ENCODE measurements at regions of chr19 and their contacts with region 1.

Region 1: GRCh38 chr19:45886427-45887199 is 672 bp upstream of the IRF2BP1 start:
- DNase-seq: peak; percentile 80 to 95 (median 85)
- ATAC-seq: peak; percentile 68
- H3K4me3 ChIP-seq: peak overlapping the region; percentile 78
- H3K4me3 Mint-ChIP-seq: peak overlapping the region; percentile 98
- H3K27ac ChIP-seq: peak overlapping the region; percentile 82 to 87
- H3K27ac Mint-ChIP-seq: peak overlapping the region; percentile 99
- H3K4me1 ChIP-seq: peaks cover 46% of the 10 kb centered on the region
- H3K4me1 Mint-ChIP-seq: peaks cover 31% of the 10 kb centered on the region
- H3K27me3 ChIP-seq: no peaks in the 10 kb centered on the region
- H3K27me3 Mint-ChIP-seq: no peaks in the 10 kb centered on the region
- CTCF ChIP-seq: no peak

Region 2: GRCh38 chr19:45753546-45753945 is 133.1 kb before region 1 on chr19:
- CTCF ChIA-PET with region 1: no interaction called
- POLR2A ChIA-PET with region 1: no interaction called
- intact Hi-C with region 1: no loop called
- DNase-seq: no peak
- ATAC-seq: no peak
- H3K4me3 ChIP-seq: no peak overlapping the region
- H3K4me3 Mint-ChIP-seq: no peak overlapping the region
- H3K27ac ChIP-seq: no peak overlapping the region
- H3K27ac Mint-ChIP-seq: no peak overlapping the region
- H3K4me1 ChIP-seq: no peaks in the 10 kb centered on the region
- H3K4me1 Mint-ChIP-seq: no peaks in the 10 kb centered on the region
- H3K27me3 ChIP-seq: no peaks in the 10 kb centered on the region
- H3K27me3 Mint-ChIP-seq: no peaks in the 10 kb centered on the region
- CTCF ChIP-seq: no peak

Region 3: GRCh38 chr19:45770192-45771101 is 116.2 kb before region 1 on chr19:
- CTCF ChIA-PET with region 1: no interaction called
- POLR2A ChIA-PET with region 1: interaction called, 21 read pairs
- intact Hi-C with region 1: loop called in 1 of 2 experiments (anchors 1 kb)
- DNase-seq: peak; percentile 82 to 95 (median 90)
- ATAC-seq: peak; percentile 75
- H3K4me3 ChIP-seq: peak overlapping the region; percentile 79
- H3K4me3 Mint-ChIP-seq: peak overlapping the region; percentile 89
- H3K27ac ChIP-seq: peak overlapping the region in 1 of 2 donors; percentile 52
- H3K27ac Mint-ChIP-seq: peak overlapping the region; percentile 87
- H3K4me1 ChIP-seq: peaks cover 35% of the 10 kb centered on the region
- H3K4me1 Mint-ChIP-seq: peaks cover 25% of the 10 kb centered on the region
- H3K27me3 ChIP-seq: peaks cover 12 to 22% of the 10 kb centered on the region in 2 experiments
- H3K27me3 Mint-ChIP-seq: peaks cover 5% of the 10 kb centered on the region
- CTCF ChIP-seq: peak; percentile 97

Region 4: DNA sequence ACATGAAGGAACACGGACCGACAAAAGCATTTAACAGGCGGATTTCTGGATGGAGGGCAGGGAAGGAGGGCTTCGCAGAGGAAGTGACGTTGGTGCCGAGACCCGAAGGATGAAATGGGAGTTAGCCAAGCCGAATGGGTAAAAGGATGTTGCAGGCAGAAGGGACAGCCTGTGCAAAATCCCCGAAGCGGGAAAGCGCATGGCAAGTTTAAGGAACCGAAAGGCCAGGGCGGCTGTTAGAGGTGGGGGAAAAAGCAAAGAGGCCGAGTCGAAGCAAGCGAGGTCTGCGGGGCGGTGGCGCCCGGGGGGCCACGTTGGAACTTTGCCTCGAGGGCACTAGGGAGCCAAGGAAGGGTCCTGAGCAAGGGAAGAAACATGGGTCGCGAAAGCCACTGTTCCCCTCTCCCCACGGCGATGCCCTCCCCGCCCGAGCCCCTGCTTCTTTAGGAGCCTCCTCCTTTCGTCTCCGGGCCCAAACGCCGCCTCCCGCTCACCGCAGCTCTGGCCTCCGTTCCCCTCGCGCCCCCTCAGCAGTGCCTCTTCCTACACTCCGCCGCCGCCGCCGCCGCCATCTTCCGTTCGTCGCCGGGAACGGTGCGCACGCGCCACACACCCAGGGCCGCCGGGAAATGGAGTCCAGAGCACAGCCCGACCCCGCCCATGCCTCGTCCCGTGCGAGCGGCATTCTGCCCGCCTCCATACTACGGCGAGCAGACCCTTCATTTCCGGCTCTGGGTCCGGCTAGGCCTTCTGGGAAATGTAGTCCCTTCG is 23.9 kb before region 1 on chr19 and contains the start of gene SYMPK:
- CTCF ChIA-PET with region 1: interaction called, 14 read pairs
- POLR2A ChIA-PET with region 1: interaction called, 37 read pairs
- intact Hi-C with region 1: loop called (anchors 1 kb)
- DNase-seq: peak; percentile 96 to 99 (median 98)
- ATAC-seq: peak; percentile 97
- H3K4me3 ChIP-seq: peak within 1 kb of the TSS; percentile 80
- H3K4me3 Mint-ChIP-seq: peak within 1 kb of the TSS; percentile 99
- H3K27ac ChIP-seq: peak within 1 kb of the TSS; percentile 66 to 86
- H3K27ac Mint-ChIP-seq: peak within 1 kb of the TSS; percentile 83
- H3K4me1 ChIP-seq: peaks cover 29% of the 10 kb centered on the region
- H3K4me1 Mint-ChIP-seq: peaks cover 34% of the 10 kb centered on the region
- H3K27me3 ChIP-seq: peaks cover 9 to 13% of the 10 kb centered on the region in 2 experiments
- H3K27me3 Mint-ChIP-seq: peaks cover 29% of the 10 kb centered on the region
- CTCF ChIP-seq: no peak
- total RNA-seq, gene SYMPK: 63.3 to 65.0 TPM

Region 5: GRCh38 chr19:45913874-45914830 is 27.5 kb after region 1 on chr19 and contains the start of gene NANOS2:
- CTCF ChIA-PET with region 1: no interaction called
- POLR2A ChIA-PET with region 1: no interaction called
- intact Hi-C with region 1: no loop called
- DNase-seq: no peak
- ATAC-seq: no peak
- H3K4me3 ChIP-seq: no peak within 1 kb of the TSS
- H3K4me3 Mint-ChIP-seq: no peak within 1 kb of the TSS
- H3K27ac ChIP-seq: no peak within 1 kb of the TSS
- H3K27ac Mint-ChIP-seq: no peak within 1 kb of the TSS
- H3K4me1 ChIP-seq: no peaks in the 10 kb centered on the region
- H3K4me1 Mint-ChIP-seq: no peaks in the 10 kb centered on the region
- H3K27me3 ChIP-seq: peaks cover 0 to 18% of the 10 kb centered on the region in 2 experiments
- H3K27me3 Mint-ChIP-seq: peaks cover 49% of the 10 kb centered on the region
- CTCF ChIP-seq: no peak
- total RNA-seq, gene NANOS2: not detected

Region 6: GRCh38 chr19:45994989-45995714 is 108.5 kb after region 1 on chr19 and contains the start of gene CCDC61:
- CTCF ChIA-PET with region 1: no interaction called
- POLR2A ChIA-PET with region 1: interaction called, 5 read pairs
- intact Hi-C with region 1: loop called (anchors 1 to 5 kb)
- DNase-seq: peak; percentile 91 to 100 (median 94)
- ATAC-seq: peak; percentile 94
- H3K4me3 ChIP-seq: peak within 1 kb of the TSS; percentile 79
- H3K4me3 Mint-ChIP-seq: no peak within 1 kb of the TSS
- H3K27ac ChIP-seq: peak within 1 kb of the TSS; percentile 49 to 67
- H3K27ac Mint-ChIP-seq: no peak within 1 kb of the TSS
- H3K4me1 ChIP-seq: peaks cover 27% of the 10 kb centered on the region
- H3K4me1 Mint-ChIP-seq: peaks cover 17% of the 10 kb centered on the region
- H3K27me3 ChIP-seq: no peaks in the 10 kb centered on the region
- H3K27me3 Mint-ChIP-seq: peaks cover 5% of the 10 kb centered on the region
- CTCF ChIP-seq: no peak
- total RNA-seq, gene CCDC61: 4.9 to 6.6 TPM

Region 7: DNA sequence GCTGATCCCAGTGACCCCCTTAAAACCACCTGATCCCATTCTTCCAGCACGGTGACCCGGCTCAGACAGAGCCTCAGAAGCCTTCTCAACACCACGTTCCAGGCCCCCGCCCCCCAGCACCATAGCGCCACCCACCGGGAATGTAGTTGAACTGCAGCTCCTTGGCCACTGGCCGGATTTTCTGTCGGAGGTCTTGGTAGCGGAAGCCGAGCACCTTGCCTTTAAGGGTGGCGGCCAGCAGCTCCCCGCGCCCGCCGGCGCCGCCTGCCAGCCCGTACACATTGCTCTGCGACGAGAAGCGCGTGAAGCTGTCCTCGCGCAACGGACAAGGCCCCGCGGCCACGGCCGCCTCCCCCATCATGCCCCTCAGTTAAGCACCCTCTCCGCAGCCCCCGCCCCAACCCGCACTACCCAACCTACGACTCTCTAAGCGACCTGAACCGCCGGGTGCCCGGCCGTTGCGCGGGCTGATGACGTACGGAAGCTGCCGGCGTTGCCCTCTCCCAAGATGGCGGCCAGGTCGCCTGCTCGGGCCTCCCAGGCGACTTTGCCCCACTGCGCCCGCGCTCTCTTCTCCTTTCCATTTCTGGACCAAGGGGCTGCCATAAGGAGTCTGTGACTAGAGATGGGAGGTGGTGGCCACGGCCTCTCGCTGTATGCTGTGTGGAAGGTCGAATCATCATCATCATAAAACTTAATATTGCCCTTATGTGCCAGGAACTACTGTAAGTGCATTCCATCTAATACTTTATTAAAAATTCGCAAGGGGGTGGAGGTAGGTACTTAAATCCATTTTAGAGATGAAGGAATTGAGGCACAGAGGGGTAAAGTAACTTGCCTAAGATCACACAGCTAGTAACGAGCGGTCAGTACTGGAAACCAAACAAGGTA is 1597.4 kb after region 1 on chr19 and contains the start of gene KPTN:
- CTCF ChIA-PET with region 1: no interaction called
- POLR2A ChIA-PET with region 1: no interaction called
- intact Hi-C with region 1: loop called in 1 of 2 experiments (anchors 5 kb)
- DNase-seq: peak; percentile 78 to 94 (median 83)
- ATAC-seq: peak; percentile 83
- H3K4me3 ChIP-seq: peak within 1 kb of the TSS; percentile 82
- H3K4me3 Mint-ChIP-seq: peak within 1 kb of the TSS; percentile 97
- H3K27ac ChIP-seq: peak within 1 kb of the TSS; percentile 73 to 94
- H3K27ac Mint-ChIP-seq: peak within 1 kb of the TSS; percentile 96
- H3K4me1 ChIP-seq: peaks cover 33% of the 10 kb centered on the region
- H3K4me1 Mint-ChIP-seq: peaks cover 37% of the 10 kb centered on the region
- H3K27me3 ChIP-seq: no peaks in the 10 kb centered on the region
- H3K27me3 Mint-ChIP-seq: no peaks in the 10 kb centered on the region
- CTCF ChIP-seq: peak; percentile 75
- total RNA-seq, gene KPTN: 3.6 to 4.5 TPM